Activated CD8-positive, alpha-beta memory T cell treated with anti-CD3 and anti-CD28 coated beads, Interleukin-2, amount 10 ng/mL, durations not matched to agents 7 days and 5 days (primary cell): ENCODE measurements at regions of chr1 and their contacts with region 1.

Region 1: DNA sequence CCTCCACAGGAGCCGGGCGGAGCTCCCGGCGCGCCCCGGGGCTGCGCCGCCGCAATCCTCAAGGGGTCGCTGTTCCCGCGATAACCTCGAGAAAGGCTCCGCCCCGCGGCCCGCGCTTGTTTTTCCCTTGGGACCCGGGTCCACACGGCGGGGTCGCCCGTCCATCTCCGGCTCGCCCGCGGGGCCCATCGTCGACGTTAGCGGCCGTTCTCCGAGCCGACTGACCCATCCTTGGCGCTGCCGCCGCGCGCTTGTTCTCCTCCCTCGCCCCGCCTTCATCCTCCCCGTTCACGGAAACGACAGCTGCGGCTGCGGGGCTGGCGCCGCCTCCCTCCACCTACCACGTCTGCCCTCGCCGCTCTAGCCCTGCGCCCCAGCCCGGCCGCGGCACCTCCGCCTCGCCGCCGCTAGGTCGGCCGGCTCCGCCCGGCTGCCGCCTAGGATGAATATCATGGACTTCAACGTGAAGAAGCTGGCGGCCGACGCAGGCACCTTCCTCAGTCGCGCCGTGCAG is at the start of gene SH3GLB1:
- DNase-seq: peak; percentile 92
- ATAC-seq: peak; percentile 92
- H3K4me3 Mint-ChIP-seq: peak within 1 kb of the TSS; percentile 97
- H3K27ac Mint-ChIP-seq: peak within 1 kb of the TSS; percentile 96
- H3K4me1 Mint-ChIP-seq: peaks cover 40% of the 10 kb centered on the region
- H3K27me3 Mint-ChIP-seq: no peaks in the 10 kb centered on the region
- total RNA-seq, gene SH3GLB1: 62.1 to 68.6 TPM

Region 2: GRCh38 chr1:86387916-86388627 is 316.4 kb before region 1 on chr1:
- CTCF ChIA-PET with region 1: interaction called, 10 read pairs
- DNase-seq: no peak
- ATAC-seq: no peak
- H3K4me3 Mint-ChIP-seq: no peak overlapping the region
- H3K27ac Mint-ChIP-seq: no peak overlapping the region
- H3K4me1 Mint-ChIP-seq: peaks cover 42% of the 10 kb centered on the region
- H3K27me3 Mint-ChIP-seq: no peaks in the 10 kb centered on the region

Region 3: GRCh38 chr1:86583593-86583992 is 120.9 kb before region 1 on chr1:
- CTCF ChIA-PET with region 1: no interaction called
- DNase-seq: no peak
- ATAC-seq: no peak
- H3K4me3 Mint-ChIP-seq: no peak overlapping the region
- H3K27ac Mint-ChIP-seq: no peak overlapping the region
- H3K4me1 Mint-ChIP-seq: no peaks in the 10 kb centered on the region
- H3K27me3 Mint-ChIP-seq: peaks cover 5% of the 10 kb centered on the region

Region 4: DNA sequence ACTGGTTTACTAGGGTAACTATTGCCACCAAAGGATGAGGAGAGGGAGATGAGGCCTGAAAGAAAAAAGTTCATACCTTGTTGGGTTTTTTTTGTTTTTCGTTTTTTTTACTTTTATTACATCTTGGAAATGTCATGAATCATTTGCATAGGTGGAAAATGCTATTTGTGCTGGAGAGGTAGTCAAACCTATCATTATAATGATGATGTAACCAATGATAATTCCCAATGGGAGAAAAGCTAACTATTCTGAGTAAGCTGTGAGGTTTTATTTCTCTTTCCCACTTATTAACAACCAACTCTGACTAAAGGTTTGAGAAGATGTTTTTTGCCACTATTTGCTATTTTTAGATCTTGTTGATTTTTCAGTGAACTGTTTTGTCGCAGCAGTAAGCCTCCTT is 28.8 kb after region 1 on chr1:
- CTCF ChIA-PET with region 1: interaction called, 16 read pairs
- DNase-seq: no peak
- ATAC-seq: no peak
- H3K4me3 Mint-ChIP-seq: no peak overlapping the region
- H3K27ac Mint-ChIP-seq: no peak overlapping the region
- H3K4me1 Mint-ChIP-seq: peaks cover 4% of the 10 kb centered on the region
- H3K27me3 Mint-ChIP-seq: no peaks in the 10 kb centered on the region

Region 5: DNA sequence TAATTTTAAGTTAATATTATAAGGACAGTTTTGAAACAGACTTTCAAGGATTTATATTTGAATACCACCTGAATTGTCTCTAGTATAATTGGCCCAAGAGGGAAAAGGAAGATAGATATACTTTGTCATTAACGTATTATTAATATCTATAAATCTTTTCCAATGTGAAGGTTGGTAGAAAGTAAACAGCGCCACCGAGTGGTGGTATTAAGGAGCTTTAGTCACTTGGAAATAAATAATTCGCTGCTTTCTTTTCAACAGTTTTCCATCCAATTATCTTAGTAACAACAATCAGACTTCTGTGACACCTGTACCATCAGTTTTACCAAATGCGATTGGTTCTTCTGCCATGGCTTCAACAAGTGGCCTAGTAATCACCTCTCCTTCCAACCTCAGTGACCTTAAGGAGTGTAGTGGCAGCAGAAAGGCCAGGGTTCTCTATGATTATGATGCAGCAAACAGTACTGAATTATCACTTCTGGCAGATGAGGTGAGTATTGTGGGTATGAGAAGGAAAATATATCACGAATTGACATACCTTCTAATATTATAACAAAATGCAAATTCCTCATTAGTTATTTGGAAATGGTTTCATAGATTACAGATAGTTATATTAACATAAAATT is 37.5 kb after region 1 on chr1:
- CTCF ChIA-PET with region 1: interaction called, 27 read pairs
- DNase-seq: no peak
- ATAC-seq: no peak
- H3K4me3 Mint-ChIP-seq: no peak overlapping the region
- H3K27ac Mint-ChIP-seq: no peak overlapping the region
- H3K4me1 Mint-ChIP-seq: peaks cover 4% of the 10 kb centered on the region
- H3K27me3 Mint-ChIP-seq: no peaks in the 10 kb centered on the region

Region 6: GRCh38 chr1:86887479-86888162 is 183.1 kb after region 1 on chr1:
- CTCF ChIA-PET with region 1: no interaction called
- DNase-seq: no peak
- ATAC-seq: no peak
- H3K4me3 Mint-ChIP-seq: no peak overlapping the region
- H3K27ac Mint-ChIP-seq: no peak overlapping the region
- H3K4me1 Mint-ChIP-seq: no peaks in the 10 kb centered on the region
- H3K27me3 Mint-ChIP-seq: no peaks in the 10 kb centered on the region

Region 7: GRCh38 chr1:86913896-86914634 is 209.6 kb after region 1 on chr1 and contains the start of gene SELENOF:
- CTCF ChIA-PET with region 1: interaction called, 24 read pairs
- DNase-seq: peak; percentile 99
- ATAC-seq: peak; percentile 91
- H3K4me3 Mint-ChIP-seq: no peak within 1 kb of the TSS
- H3K27ac Mint-ChIP-seq: no peak within 1 kb of the TSS
- H3K4me1 Mint-ChIP-seq: peaks cover 42% of the 10 kb centered on the region
- H3K27me3 Mint-ChIP-seq: no peaks in the 10 kb centered on the region
- total RNA-seq, gene SELENOF: 128 to 162 TPM